ENCODE measurements at regions of chr3 and their contacts with region 1.

Region 1: DNA sequence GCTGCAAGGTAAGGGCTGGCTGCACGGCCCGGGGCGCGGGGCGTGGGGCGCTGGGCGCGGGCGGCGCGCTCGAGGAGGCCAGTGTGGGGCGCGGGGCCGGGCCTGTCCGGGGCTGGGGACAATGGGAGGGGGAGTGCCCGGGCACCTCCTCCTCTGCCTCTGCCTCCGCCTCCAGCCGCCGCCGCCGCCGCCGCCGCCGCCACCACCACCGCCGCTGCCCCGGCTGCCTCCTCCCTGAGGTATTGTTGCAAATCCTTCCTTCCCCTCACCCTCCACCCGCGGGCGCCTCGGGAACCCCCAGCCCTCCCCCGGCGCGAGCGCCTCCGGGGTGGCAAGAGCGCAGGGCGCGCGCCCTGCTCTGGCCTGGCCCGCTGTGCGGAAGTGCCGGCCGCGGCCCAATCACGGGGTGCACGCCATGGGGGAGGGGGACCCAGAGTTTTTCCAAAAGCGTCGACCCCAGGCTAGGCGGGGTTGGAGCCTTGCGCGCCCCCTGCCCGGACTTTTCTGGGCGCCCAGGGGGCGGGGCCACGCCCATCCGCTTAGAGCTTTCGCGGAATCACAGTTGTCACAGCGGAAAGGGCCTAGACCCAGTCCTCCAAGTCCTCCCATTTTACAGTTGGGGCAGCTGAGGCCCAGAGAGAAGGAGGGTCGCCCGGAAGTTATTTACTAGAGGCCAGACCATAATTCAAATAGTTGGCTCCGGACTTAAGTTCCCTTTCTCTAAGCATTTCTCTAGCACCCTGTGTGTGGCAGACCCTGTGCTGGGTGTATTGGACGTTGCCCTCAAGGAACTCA is at the start of gene LPP:
- DNase-seq: peak; percentile 64 to 88 (median 77)
- ATAC-seq: peak; percentile 92
- H3K4me3 ChIP-seq: peak within 1 kb of the TSS; percentile 76
- H3K4me3 Mint-ChIP-seq: peak within 1 kb of the TSS; percentile 78 to 95 (median 91)
- H3K27ac ChIP-seq: peak within 1 kb of the TSS; percentile 75
- H3K27ac Mint-ChIP-seq: peak within 1 kb of the TSS; percentile 58 to 98 (median 88)
- H3K4me1 ChIP-seq: peaks cover 21 to 29% of the 10 kb centered on the region in 2 donors
- H3K4me1 Mint-ChIP-seq: peaks cover 40 to 67% (median 58%) of the 10 kb centered on the region in 7 donors
- H3K27me3 ChIP-seq: no peaks in the 10 kb centered on the region
- H3K27me3 Mint-ChIP-seq: no peaks in the 10 kb centered on the region
- total RNA-seq, gene LPP: 12.5 to 95.2 (median 52.3) TPM

Region 2: GRCh38 chr3:187368251-187369088 is 785.7 kb before region 1 on chr3 and contains the start of gene RTP4:
- CTCF ChIA-PET with region 1: no interaction called
- POLR2A ChIA-PET with region 1: no interaction called
- intact Hi-C with region 1: loop called in 1 of 2 experiments (anchors 10 kb)
- DNase-seq: peak in 8 of 9 donors; percentile 25 to 70 (median 55)
- ATAC-seq: peak; percentile 86
- H3K4me3 ChIP-seq: peak within 1 kb of the TSS; percentile 85
- H3K4me3 Mint-ChIP-seq: peak within 1 kb of the TSS; percentile 89 to 100 (median 98)
- H3K27ac ChIP-seq: peak within 1 kb of the TSS; percentile 78
- H3K27ac Mint-ChIP-seq: peak within 1 kb of the TSS; percentile 94 to 100 (median 98)
- H3K4me1 ChIP-seq: peaks cover 9 to 13% of the 10 kb centered on the region in 2 donors
- H3K4me1 Mint-ChIP-seq: peaks cover 22 to 42% (median 29%) of the 10 kb centered on the region in 7 donors
- H3K27me3 ChIP-seq: no peaks in the 10 kb centered on the region
- H3K27me3 Mint-ChIP-seq: no peaks in the 10 kb centered on the region
- total RNA-seq, gene RTP4: 1.6 to 23.1 (median 5.5) TPM

Region 3: DNA sequence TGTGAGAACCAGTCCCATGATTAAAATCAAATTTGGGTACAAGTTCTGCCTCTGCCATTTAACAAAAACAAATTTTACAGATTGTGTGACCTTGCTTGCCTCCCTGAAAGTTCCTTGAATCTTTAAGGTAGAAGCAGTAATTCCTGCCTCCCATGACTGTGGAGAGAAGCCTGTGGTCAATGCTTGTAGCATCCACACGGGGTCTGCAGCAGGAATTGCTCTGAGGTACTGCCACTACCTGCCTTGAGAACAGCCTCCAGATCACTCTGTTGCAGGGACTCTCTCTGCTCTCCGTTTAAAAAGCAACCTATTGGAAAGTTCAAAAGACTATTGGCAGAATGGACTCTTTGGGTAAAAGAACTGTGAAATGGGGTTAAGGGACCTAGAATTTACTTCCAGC is 559.9 kb before region 1 on chr3:
- CTCF ChIA-PET with region 1: no interaction called
- POLR2A ChIA-PET with region 1: no interaction called
- intact Hi-C with region 1: no loop called
- DNase-seq: no peak
- ATAC-seq: no peak
- H3K4me3 ChIP-seq: no peak overlapping the region
- H3K4me3 Mint-ChIP-seq: no peak overlapping the region
- H3K27ac ChIP-seq: no peak overlapping the region
- H3K27ac Mint-ChIP-seq: no peak overlapping the region
- H3K4me1 ChIP-seq: no peaks in the 10 kb centered on the region
- H3K4me1 Mint-ChIP-seq: no peaks in the 10 kb centered on the region
- H3K27me3 ChIP-seq: peaks cover 0 to 1% of the 10 kb centered on the region in 2 donors
- H3K27me3 Mint-ChIP-seq: peaks cover 41 to 60% (median 57%) of the 10 kb centered on the region in 5 donors

Region 4: GRCh38 chr3:187974871-187975271 is 179.3 kb before region 1 on chr3:
- CTCF ChIA-PET with region 1: no interaction called
- POLR2A ChIA-PET with region 1: no interaction called
- intact Hi-C with region 1: loop called (anchors 1 kb)
- DNase-seq: peak in 6 of 9 donors; percentile 8 to 42 (median 32)
- ATAC-seq: peak; percentile 67
- H3K4me3 ChIP-seq: peak overlapping the region; percentile 3
- H3K4me3 Mint-ChIP-seq: peak overlapping the region; percentile 41 to 85 (median 76)
- H3K27ac ChIP-seq: no peak overlapping the region
- H3K27ac Mint-ChIP-seq: peak overlapping the region; percentile 44 to 96 (median 80)
- H3K4me1 ChIP-seq: peaks cover 36 to 40% of the 10 kb centered on the region in 2 donors
- H3K4me1 Mint-ChIP-seq: peaks cover 31 to 71% (median 49%) of the 10 kb centered on the region in 7 donors
- H3K27me3 ChIP-seq: no peaks in the 10 kb centered on the region
- H3K27me3 Mint-ChIP-seq: no peaks in the 10 kb centered on the region

Region 5: DNA sequence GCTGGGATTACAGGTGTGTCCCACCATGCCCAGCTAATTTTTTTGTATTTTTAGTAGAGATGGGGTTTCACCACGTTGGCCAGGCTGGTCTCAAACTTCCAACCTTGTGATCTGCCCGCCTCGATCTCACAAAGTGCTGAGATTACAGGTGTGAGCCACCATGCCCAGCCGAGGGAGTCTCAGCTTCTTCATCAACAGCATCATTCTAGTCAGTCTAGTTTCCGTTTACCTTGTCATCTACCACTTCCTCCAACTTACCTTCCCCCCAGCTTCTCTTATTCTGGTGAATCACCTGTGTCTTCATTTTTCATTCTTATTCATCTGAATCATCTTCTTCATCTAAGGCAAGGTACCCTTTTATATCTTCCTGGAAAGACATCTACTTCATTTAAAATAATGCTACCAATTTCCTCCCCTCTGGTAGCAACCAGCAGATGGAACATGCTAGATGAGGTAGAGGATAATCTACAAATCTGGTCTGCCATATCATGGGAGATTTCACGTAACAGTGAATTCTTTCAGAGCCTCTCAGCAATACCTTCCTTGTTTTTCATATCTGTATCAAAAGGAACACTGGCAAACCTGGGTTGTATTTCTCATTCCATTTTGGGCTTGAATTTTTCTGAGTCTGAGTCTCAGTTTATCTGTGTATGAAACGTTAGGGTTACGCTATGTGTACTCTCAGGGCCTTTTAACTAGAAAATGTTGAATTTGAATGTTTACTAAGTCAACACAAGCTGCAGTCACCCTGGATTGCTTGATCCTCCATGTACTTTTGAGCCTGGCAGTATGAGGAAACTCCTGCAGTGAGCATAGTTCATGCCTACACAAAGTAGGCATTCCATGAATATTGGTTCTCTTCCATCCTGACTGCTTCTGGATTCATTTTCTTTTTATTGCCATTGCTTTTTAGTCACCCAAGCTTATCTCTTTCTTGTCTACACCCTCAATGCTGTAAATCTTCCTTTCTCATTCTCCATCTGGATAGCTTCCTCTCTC is 16.5 kb after region 1 on chr3:
- CTCF ChIA-PET with region 1: interaction called, 3 read pairs
- POLR2A ChIA-PET with region 1: interaction called, 3 read pairs
- intact Hi-C with region 1: loop called (anchors 1 to 2 kb)
- DNase-seq: peak in 6 of 9 donors; percentile 25 to 61 (median 44)
- ATAC-seq: peak; percentile 87
- H3K4me3 ChIP-seq: no peak overlapping the region
- H3K4me3 Mint-ChIP-seq: peak overlapping the region in 9 of 10 donors; percentile 12 to 50 (median 33)
- H3K27ac ChIP-seq: no peak overlapping the region
- H3K27ac Mint-ChIP-seq: peak overlapping the region; percentile 14 to 85 (median 56)
- H3K4me1 ChIP-seq: peaks cover 11 to 13% of the 10 kb centered on the region in 2 donors
- H3K4me1 Mint-ChIP-seq: peaks cover 25 to 50% (median 39%) of the 10 kb centered on the region in 7 donors
- H3K27me3 ChIP-seq: no peaks in the 10 kb centered on the region
- H3K27me3 Mint-ChIP-seq: no peaks in the 10 kb centered on the region

Region 6: DNA sequence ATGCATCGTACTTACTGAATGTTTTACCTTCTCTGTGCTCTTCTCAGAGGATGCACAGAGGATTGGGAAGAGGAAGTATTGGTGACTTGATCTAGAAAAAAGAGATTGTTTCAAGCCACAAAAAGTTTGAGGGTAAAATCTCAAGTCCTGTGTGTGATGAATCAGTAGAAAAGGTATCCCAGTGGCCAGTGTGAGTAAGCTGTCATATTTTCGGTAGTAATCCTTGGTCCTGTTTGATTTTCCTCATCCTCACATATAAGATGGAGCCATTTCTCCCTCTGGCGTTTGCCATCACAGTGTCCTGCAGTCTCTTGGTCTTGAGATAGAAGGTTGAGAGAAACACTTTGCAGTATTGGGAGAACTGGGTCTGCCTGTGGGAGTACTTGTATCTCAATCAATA is 166.5 kb after region 1 on chr3:
- CTCF ChIA-PET with region 1: no interaction called
- POLR2A ChIA-PET with region 1: no interaction called
- intact Hi-C with region 1: loop called in 1 of 2 experiments (anchors 10 kb)
- DNase-seq: no peak
- ATAC-seq: no peak
- H3K4me3 ChIP-seq: no peak overlapping the region
- H3K4me3 Mint-ChIP-seq: peak overlapping the region in 1 of 10 donors; percentile 37
- H3K27ac ChIP-seq: no peak overlapping the region
- H3K27ac Mint-ChIP-seq: peak overlapping the region in 2 of 9 donors; percentile 11 to 59
- H3K4me1 ChIP-seq: peaks cover 19 to 26% of the 10 kb centered on the region in 2 donors
- H3K4me1 Mint-ChIP-seq: peaks cover 34 to 67% (median 55%) of the 10 kb centered on the region in 7 donors
- H3K27me3 ChIP-seq: no peaks in the 10 kb centered on the region
- H3K27me3 Mint-ChIP-seq: peaks cover 0 to 6% (median 0%) of the 10 kb centered on the region in 5 donors

Region 7: GRCh38 chr3:189132231-189132707 is 978.1 kb after region 1 on chr3:
- CTCF ChIA-PET with region 1: no interaction called
- POLR2A ChIA-PET with region 1: no interaction called
- intact Hi-C with region 1: loop called in 1 of 2 experiments (anchors 5 kb)
- DNase-seq: peak in 8 of 9 donors; percentile 20 to 76 (median 62)
- ATAC-seq: peak; percentile 96
- H3K4me3 ChIP-seq: peak overlapping the region; percentile 26
- H3K4me3 Mint-ChIP-seq: peak overlapping the region; percentile 39 to 83 (median 71)
- H3K27ac ChIP-seq: peak overlapping the region; percentile 22
- H3K27ac Mint-ChIP-seq: peak overlapping the region; percentile 43 to 98 (median 79)
- H3K4me1 ChIP-seq: peaks cover 13 to 34% of the 10 kb centered on the region in 2 donors
- H3K4me1 Mint-ChIP-seq: peaks cover 13 to 38% (median 23%) of the 10 kb centered on the region in 7 donors
- H3K27me3 ChIP-seq: no peaks in the 10 kb centered on the region
- H3K27me3 Mint-ChIP-seq: no peaks in the 10 kb centered on the region

Measured in naive thymus-derived CD4-positive, alpha-beta T cell (primary cell).